ENCODE measurements at regions of chr22 and their contacts with region 1.

Region 1: DNA sequence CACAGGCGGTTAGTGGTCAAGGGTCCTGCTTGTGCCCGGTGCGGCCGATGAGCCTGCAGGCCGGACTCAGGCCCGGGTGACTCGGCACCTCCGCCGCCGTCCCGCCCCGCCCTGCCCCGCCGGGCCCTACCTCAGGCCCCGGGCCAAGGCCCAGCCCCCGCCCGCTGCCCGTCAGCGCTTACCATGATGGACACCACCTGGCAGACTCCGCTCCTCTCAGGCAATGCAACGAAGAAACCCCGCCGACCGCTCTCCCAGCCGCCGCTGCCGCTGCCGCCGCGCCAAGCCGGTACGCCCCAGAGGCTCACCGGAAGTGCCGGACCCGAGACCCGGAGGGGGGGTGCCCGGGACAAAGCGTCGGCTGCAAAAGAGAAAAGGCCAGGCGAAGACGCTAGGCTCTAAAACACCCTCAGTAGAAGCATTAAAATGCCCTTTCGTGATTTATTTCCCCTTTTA is at the start of gene UFD1:
- DNase-seq: peak; percentile 84
- ATAC-seq: peak; percentile 56
- H3K4me3 Mint-ChIP-seq: peak within 1 kb of the TSS; percentile 99
- H3K27ac Mint-ChIP-seq: peak within 1 kb of the TSS; percentile 99
- H3K4me1 Mint-ChIP-seq: peaks cover 26% of the 10 kb centered on the region
- H3K27me3 Mint-ChIP-seq: no peaks in the 10 kb centered on the region
- CTCF ChIP-seq: no peak
- total RNA-seq, gene UFD1: 65.0 to 78.0 TPM

Region 2: GRCh38 chr22:19432133-19432851 is 46.6 kb before region 1 on chr22 and contains the start of gene MRPL40:
- CTCF ChIA-PET with region 1: no interaction called
- POLR2A ChIA-PET with region 1: interaction called, 13 read pairs
- intact Hi-C with region 1: no loop called
- DNase-seq: peak; percentile 93
- ATAC-seq: peak; percentile 87
- H3K4me3 Mint-ChIP-seq: peak within 1 kb of the TSS; percentile 91
- H3K27ac Mint-ChIP-seq: peak within 1 kb of the TSS; percentile 92
- H3K4me1 Mint-ChIP-seq: peaks cover 35% of the 10 kb centered on the region
- H3K27me3 Mint-ChIP-seq: no peaks in the 10 kb centered on the region
- CTCF ChIP-seq: no peak
- total RNA-seq, gene MRPL40: 39.8 to 40.9 TPM

Region 3: DNA sequence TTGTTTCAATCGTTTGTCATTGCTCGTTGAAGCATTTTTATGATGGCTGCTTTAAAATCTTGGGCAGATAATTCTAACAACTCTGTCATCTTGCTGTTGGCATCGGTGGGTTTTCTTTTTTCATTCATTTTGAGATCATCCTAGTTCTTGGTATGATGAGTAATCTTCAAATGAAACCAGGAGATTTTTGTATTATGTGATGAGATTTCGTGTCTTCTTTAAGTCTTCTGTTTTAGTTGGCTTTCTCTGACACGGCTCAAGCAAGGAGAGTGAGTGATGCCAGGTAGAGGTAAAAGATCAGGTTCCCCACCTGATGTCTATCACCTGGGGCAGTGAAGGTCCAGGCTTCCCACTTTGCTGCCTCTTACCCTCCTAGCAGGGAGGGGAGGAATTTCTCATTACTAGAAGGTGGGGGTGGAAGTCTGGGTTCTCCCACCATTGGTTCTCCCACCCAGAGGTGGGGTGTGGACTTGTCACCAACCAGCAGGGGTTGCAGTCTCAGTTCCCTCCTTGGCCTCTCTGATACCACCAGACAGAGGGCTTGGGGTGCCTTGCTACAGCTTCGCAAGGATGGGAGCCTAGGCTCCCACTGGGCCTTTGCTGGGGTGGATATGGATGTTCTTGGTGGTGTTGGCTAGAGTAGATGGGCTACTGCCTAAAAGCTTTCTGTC is 13.7 kb after region 1 on chr22:
- CTCF ChIA-PET with region 1: interaction called, 3 read pairs
- POLR2A ChIA-PET with region 1: interaction called, 12 read pairs
- intact Hi-C with region 1: no loop called
- DNase-seq: no peak
- ATAC-seq: peak; percentile 53
- H3K4me3 Mint-ChIP-seq: no peak overlapping the region
- H3K27ac Mint-ChIP-seq: peak overlapping the region; percentile 2
- H3K4me1 Mint-ChIP-seq: peaks cover 9% of the 10 kb centered on the region
- H3K27me3 Mint-ChIP-seq: no peaks in the 10 kb centered on the region
- CTCF ChIP-seq: no peak

Region 4: DNA sequence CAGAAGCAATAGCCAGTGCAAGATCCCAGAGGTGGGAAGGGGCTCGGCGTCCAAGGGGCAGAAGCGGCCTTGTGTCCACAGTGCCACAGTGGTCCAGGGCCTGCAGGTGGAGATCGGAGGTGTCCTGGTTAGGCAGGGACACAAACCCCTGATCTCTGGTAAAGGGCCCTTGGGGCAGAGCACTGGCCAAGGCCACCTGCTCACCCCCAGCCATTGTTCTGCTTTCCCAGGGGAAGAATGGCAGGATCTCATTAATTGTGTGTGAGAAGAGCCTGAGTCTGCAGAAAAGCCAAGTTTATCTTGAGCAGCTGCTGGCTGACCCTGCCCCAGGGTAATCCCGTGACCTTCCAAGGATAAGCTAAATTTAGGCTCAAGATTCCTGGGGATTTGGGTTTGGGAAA is 48.4 kb after region 1 on chr22:
- CTCF ChIA-PET with region 1: no interaction called
- POLR2A ChIA-PET with region 1: no interaction called
- intact Hi-C with region 1: no loop called
- DNase-seq: no peak
- ATAC-seq: no peak
- H3K4me3 Mint-ChIP-seq: no peak overlapping the region
- H3K27ac Mint-ChIP-seq: no peak overlapping the region
- H3K4me1 Mint-ChIP-seq: peaks cover 9% of the 10 kb centered on the region
- H3K27me3 Mint-ChIP-seq: peaks cover 22% of the 10 kb centered on the region
- CTCF ChIP-seq: no peak

Region 5: DNA sequence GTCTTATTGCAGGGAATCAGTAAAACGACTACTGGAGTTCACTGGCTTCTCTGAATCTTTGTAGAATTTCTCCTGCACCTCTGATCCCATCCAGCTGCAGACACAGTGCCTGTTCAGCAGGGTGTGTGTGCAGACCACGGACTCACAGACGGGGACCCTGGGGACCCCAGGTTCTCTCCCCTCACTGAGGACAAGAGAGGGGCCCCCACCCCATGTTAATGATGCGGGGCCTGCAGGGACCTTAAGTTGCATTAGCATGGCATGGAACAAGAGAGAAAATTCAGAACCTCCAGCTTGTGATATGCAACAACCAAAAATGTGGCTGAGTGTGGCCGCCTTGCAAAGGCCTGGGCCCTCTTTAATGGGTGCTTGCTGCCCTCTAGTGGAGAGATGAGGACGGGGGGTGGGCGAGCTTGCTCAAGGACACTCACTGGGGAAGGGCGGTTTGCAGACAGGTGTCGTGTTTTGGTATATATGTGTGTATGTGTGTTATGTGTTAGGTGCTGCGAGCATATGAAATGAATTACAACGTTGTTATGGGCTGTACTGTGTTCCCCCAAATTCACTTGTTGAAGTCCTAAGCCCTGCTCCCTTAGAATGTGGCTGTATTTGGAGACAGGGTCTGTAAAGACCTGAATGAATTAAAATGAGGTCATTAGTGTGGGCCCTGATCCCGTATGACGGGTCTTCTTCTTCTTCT is 150.9 kb after region 1 on chr22:
- CTCF ChIA-PET with region 1: interaction called, 12 read pairs
- POLR2A ChIA-PET with region 1: no interaction called
- intact Hi-C with region 1: no loop called
- DNase-seq: peak; percentile 92
- ATAC-seq: peak; percentile 94
- H3K4me3 Mint-ChIP-seq: no peak overlapping the region
- H3K27ac Mint-ChIP-seq: no peak overlapping the region
- H3K4me1 Mint-ChIP-seq: no peaks in the 10 kb centered on the region
- H3K27me3 Mint-ChIP-seq: peaks cover 4% of the 10 kb centered on the region
- CTCF ChIP-seq: peak; percentile 91